ENCODE measurements at regions of chr20 and their contacts with region 1.

Region 1: GRCh38 chr20:3000852-3001523 is 42.4 kb upstream of the GNRH2 start:
- DNase-seq: peak; percentile 50
- ATAC-seq: peak; percentile 62
- H3K4me3 ChIP-seq: no peak overlapping the region
- H3K4me3 Mint-ChIP-seq: no peak overlapping the region
- H3K27ac ChIP-seq: no peak overlapping the region
- H3K27ac Mint-ChIP-seq: no peak overlapping the region
- H3K4me1 ChIP-seq: no peaks in the 10 kb centered on the region
- H3K4me1 Mint-ChIP-seq: no peaks in the 10 kb centered on the region
- H3K27me3 ChIP-seq: no peaks in the 10 kb centered on the region
- H3K27me3 Mint-ChIP-seq: no peaks in the 10 kb centered on the region
- CTCF ChIP-seq: peak; percentile 75

Region 2: GRCh38 chr20:2523919-2524708 is 476.9 kb before region 1 on chr20:
- CTCF ChIA-PET with region 1: interaction called, 16 read pairs
- POLR2A ChIA-PET with region 1: no interaction called
- intact Hi-C with region 1: loop called (anchors 2 kb)
- DNase-seq: peak; percentile 91
- ATAC-seq: peak; percentile 87
- H3K4me3 ChIP-seq: peak overlapping the region; percentile 52 to 94 (median 84)
- H3K4me3 Mint-ChIP-seq: peak overlapping the region; percentile 90
- H3K27ac ChIP-seq: peak overlapping the region; percentile 49 to 72
- H3K27ac Mint-ChIP-seq: peak overlapping the region; percentile 77
- H3K4me1 ChIP-seq: peaks cover 9 to 19% of the 10 kb centered on the region in 2 donors
- H3K4me1 Mint-ChIP-seq: peaks cover 12% of the 10 kb centered on the region
- H3K27me3 ChIP-seq: peaks cover 0 to 14% (median 3%) of the 10 kb centered on the region in 4 experiments
- H3K27me3 Mint-ChIP-seq: peaks cover 3% of the 10 kb centered on the region
- CTCF ChIP-seq: peak; percentile 97

Region 3: GRCh38 chr20:2713285-2713684 is 287.7 kb before region 1 on chr20:
- CTCF ChIA-PET with region 1: interaction called, 3 read pairs
- POLR2A ChIA-PET with region 1: no interaction called
- intact Hi-C with region 1: loop called (anchors 1 kb)
- DNase-seq: no peak
- ATAC-seq: no peak
- H3K4me3 ChIP-seq: no peak overlapping the region
- H3K4me3 Mint-ChIP-seq: no peak overlapping the region
- H3K27ac ChIP-seq: no peak overlapping the region
- H3K27ac Mint-ChIP-seq: no peak overlapping the region
- H3K4me1 ChIP-seq: no peaks in the 10 kb centered on the region
- H3K4me1 Mint-ChIP-seq: no peaks in the 10 kb centered on the region
- H3K27me3 ChIP-seq: peaks cover 0 to 3% (median 0%) of the 10 kb centered on the region in 4 experiments
- H3K27me3 Mint-ChIP-seq: peaks cover 12% of the 10 kb centered on the region
- CTCF ChIP-seq: no peak

Region 4: GRCh38 chr20:2742934-2743559 is 257.9 kb before region 1 on chr20:
- CTCF ChIA-PET with region 1: interaction called, 7 read pairs
- POLR2A ChIA-PET with region 1: no interaction called
- intact Hi-C with region 1: loop called (anchors 2 kb)
- DNase-seq: peak; percentile 72
- ATAC-seq: peak; percentile 78
- H3K4me3 ChIP-seq: no peak overlapping the region
- H3K4me3 Mint-ChIP-seq: no peak overlapping the region
- H3K27ac ChIP-seq: no peak overlapping the region
- H3K27ac Mint-ChIP-seq: no peak overlapping the region
- H3K4me1 ChIP-seq: peaks cover 0 to 6% of the 10 kb centered on the region in 2 donors
- H3K4me1 Mint-ChIP-seq: peaks cover 6% of the 10 kb centered on the region
- H3K27me3 ChIP-seq: peaks cover 0 to 25% (median 10%) of the 10 kb centered on the region in 4 experiments
- H3K27me3 Mint-ChIP-seq: peaks cover 38% of the 10 kb centered on the region
- CTCF ChIP-seq: peak; percentile 85

Region 5: DNA sequence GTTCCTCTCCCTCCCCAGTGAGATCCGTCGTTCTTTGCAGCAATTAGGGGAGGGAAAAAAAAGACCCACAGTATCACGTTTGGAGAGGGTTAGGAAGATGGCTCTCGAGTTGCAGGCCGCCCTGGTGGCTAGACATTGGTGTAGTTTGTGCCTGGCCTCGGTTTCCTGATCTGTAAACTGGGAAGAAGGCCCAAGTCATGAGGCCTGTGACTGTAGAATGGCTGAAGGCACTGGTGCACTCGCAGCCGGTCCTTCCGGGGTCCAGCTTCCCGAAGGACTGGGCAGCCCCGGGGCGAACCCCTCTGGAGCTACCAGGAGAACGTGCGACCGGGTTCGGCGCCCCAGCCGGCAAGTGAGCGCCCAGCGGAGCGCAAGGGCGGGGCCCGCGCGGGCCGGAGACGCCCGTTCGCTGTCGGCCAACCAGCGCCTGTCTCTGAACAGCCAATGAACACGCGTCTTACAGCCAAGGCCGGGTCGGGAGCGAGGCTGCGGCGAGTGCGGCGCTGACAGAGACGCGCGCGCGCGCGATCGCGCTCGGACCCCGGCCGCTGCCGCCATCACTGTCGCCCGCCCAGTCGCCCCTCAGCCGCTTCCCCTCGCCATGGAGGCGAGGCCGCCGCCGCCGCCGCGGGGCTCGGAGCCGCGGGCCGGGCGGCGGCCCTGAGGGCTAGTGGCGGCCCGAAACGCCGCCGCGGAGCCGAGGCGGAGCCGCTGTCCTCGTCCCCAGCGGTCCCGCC is 127.8 kb before region 1 on chr20 and contains the start of gene PTPRA:
- CTCF ChIA-PET with region 1: interaction called, 3 read pairs
- POLR2A ChIA-PET with region 1: no interaction called
- intact Hi-C with region 1: loop called (anchors 2 kb)
- DNase-seq: peak; percentile 92
- ATAC-seq: peak; percentile 94
- H3K4me3 ChIP-seq: peak within 1 kb of the TSS; percentile 77 to 85 (median 79)
- H3K4me3 Mint-ChIP-seq: peak within 1 kb of the TSS; percentile 92
- H3K27ac ChIP-seq: peak within 1 kb of the TSS; percentile 25 to 32
- H3K27ac Mint-ChIP-seq: peak within 1 kb of the TSS; percentile 84
- H3K4me1 ChIP-seq: peaks cover 27 to 31% of the 10 kb centered on the region in 2 donors
- H3K4me1 Mint-ChIP-seq: peaks cover 33% of the 10 kb centered on the region
- H3K27me3 ChIP-seq: peaks cover 0 to 11% (median 0%) of the 10 kb centered on the region in 4 experiments
- H3K27me3 Mint-ChIP-seq: peaks cover 8% of the 10 kb centered on the region
- CTCF ChIP-seq: no peak
- total RNA-seq, gene PTPRA: 64.2 and 70.0 TPM in 2 replicates

Region 6: DNA sequence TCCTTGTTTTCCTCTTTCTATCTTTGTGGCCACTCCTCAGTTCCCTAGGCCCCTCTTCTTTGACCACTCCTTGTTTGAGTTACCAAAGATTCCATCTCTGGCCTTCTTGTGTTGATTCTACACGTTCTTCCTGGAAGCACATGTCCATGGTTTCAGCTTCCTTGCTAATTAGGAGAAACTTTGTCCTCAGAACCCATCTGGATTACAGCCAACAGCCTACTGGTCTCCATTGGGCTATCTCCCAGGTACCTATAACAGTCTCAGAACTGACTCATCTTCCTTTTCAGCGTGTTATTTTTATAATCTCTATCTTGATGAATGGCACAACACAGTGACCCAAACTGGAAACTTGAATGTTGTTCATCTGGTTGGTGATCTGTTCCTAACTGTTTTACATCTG is 110.2 kb before region 1 on chr20:
- CTCF ChIA-PET with region 1: no interaction called
- POLR2A ChIA-PET with region 1: no interaction called
- intact Hi-C with region 1: no loop called
- DNase-seq: no peak
- ATAC-seq: no peak
- H3K4me3 ChIP-seq: no peak overlapping the region
- H3K4me3 Mint-ChIP-seq: no peak overlapping the region
- H3K27ac ChIP-seq: no peak overlapping the region
- H3K27ac Mint-ChIP-seq: no peak overlapping the region
- H3K4me1 ChIP-seq: peaks cover 8 to 12% of the 10 kb centered on the region in 2 donors
- H3K4me1 Mint-ChIP-seq: peaks cover 40% of the 10 kb centered on the region
- H3K27me3 ChIP-seq: no peaks in the 10 kb centered on the region
- H3K27me3 Mint-ChIP-seq: no peaks in the 10 kb centered on the region
- CTCF ChIP-seq: no peak